ENCODE measurements at regions of chr7 and their contacts with region 1.

Region 1: DNA sequence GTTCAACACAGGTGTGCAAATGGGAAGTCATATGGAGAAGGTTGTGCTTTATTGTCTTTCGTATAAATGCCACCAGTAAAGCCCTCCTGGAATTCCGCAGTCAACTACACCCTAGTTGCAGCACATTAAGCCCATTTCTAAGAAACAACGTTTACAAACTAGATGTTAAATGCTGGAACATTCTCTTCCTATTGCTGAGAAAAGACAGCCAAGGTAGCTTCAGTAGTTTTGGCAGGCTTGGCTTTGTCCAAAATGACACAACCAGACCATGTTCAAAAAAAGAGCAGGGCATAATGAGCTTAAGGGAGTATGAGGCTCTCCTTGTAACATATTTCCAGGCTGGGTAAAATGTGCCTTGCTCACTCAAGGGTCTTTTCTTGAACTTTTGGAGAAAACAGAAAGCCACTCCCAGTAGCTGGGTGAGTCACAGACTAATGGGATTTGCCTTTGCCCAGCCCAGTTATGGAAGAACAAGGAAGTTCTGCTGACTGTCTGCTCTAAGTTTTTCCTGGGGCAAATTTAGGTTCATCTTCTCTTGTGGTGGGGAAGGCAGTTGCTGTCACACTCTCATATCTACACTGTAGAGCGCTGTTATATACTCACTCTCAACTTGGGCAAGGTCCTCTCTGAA is 238.7 kb downstream of the PLXNA4 start:
- DNase-seq: no peak

Region 2: GRCh38 chr7:131538071-131538790 is 799.3 kb before region 1 on chr7:
- intact Hi-C with region 1: loop called in 1 of 2 experiments (anchors 5 kb)
- DNase-seq: peak; percentile 61

Region 3: DNA sequence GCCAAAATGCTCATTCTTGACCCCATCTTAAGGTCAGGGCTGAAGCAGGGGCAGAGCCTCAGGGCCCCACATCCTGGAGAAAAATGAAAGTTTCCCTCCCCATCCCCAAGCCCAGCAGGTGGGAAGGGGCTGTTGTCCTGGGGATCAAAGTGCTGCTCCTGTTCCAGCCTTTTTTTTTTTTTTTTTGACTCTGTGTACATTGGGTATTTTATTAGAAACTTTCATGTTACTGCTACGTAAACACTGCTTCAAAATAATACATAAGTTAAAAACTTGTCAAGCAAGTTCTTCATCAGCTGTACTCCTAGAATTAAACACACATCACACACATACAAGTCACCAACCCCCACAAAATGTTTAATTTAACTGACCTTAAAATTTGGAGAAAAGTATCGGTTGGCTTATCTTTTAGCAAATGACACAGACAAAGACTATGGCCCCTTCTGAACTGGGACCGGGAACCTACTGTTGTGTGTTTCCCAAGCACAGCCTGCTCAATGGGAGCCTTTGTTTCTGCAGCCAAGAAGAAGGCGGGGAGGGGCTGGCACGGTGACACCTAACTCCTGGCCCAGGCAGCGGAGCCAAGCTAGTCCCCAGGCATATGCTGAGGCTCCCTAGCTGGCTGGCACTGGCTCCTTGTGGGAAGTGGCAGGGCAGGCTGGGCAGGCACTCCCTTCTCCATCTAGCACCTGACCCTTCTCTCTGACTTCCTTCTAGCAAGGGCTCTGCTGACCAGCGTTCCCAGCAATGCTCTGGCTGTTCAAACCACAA is 86.5 kb before region 1 on chr7:
- intact Hi-C with region 1: loop called in 1 of 2 experiments (anchors 2 kb)
- DNase-seq: no peak